Right cardiac atrium (tissue), 5 donors: ENCODE measurements at regions of chr15 and their contacts with region 1.

Region 1: DNA sequence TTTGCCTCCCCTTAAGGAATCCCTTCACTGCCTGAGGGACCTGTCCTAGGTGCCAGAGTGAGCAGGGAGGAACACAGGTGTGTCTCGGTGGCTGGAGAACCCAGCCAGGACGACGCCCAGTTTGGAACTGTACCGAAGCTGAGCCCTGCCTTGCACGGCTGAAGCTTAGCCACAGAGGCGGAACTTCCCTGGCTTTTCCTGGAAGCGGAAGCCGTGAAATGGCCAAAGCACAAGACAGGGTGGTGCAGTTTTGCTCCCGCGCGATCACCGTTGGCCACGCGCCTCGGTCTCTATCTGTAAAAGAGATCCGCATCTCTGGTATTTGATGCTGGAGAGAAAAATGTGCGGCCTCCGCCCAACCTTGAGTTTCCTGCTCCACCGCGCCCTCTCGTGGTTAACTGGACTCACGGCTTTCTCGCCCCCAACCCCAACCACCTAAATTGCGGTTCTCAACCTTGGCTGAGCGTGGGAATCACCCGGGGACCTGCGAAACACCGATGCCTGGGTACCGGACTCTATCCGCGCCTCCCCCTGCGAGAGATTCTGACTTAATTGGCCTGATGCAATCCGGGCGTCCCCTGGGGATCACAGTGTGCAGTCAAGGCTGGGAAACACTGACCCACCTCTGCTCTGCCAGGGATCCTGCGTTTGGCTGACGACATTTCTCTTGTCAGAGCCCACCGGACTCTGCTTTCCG is 70.7 kb upstream of the ABHD2 start:
- DNase-seq: peak; percentile 86 to 91 (median 87)
- ATAC-seq: peak; percentile 68 to 80
- H3K4me3 ChIP-seq: peak overlapping the region; percentile 33
- H3K27ac ChIP-seq: peak overlapping the region; percentile 60
- H3K4me1 ChIP-seq: peaks cover 4% of the 10 kb centered on the region
- H3K27me3 ChIP-seq: no peaks in the 10 kb centered on the region

Region 2: GRCh38 chr15:88913017-88913849 is 104.3 kb before region 1 on chr15 and contains the start of gene MFGE8:
- intact Hi-C with region 1: loop called in 3 of 4 experiments (anchors 5 kb)
- DNase-seq: peak; percentile 84 to 93 (median 92)
- ATAC-seq: peak; percentile 90
- H3K4me3 ChIP-seq: peak within 1 kb of the TSS; percentile 52
- H3K27ac ChIP-seq: peak within 1 kb of the TSS; percentile 39
- H3K4me1 ChIP-seq: peaks cover 13% of the 10 kb centered on the region
- H3K27me3 ChIP-seq: no peaks in the 10 kb centered on the region
- total RNA-seq, gene MFGE8: 200 to 347 (median 278) TPM